Sigmoid colon (tissue), 7 donors: ENCODE measurements at regions of chr1 and their contacts with region 1.

Region 1: GRCh38 chr1:212630158-212630900 is 21.8 kb downstream of the ATF3 start:
- DNase-seq: peak; percentile 82
- H3K4me3 ChIP-seq: no peak overlapping the region
- H3K27ac ChIP-seq: no peak overlapping the region
- H3K4me1 ChIP-seq: peaks cover 0 to 5% (median 1%) of the 10 kb centered on the region in 4 donors
- H3K27me3 ChIP-seq: no peaks in the 10 kb centered on the region
- CTCF ChIP-seq: peak in 3 of 4 experiments; percentile 66 to 74 (median 70)
- EP300 ChIP-seq: no peak
- POLR2A ChIP-seq: no peak

Region 2: DNA sequence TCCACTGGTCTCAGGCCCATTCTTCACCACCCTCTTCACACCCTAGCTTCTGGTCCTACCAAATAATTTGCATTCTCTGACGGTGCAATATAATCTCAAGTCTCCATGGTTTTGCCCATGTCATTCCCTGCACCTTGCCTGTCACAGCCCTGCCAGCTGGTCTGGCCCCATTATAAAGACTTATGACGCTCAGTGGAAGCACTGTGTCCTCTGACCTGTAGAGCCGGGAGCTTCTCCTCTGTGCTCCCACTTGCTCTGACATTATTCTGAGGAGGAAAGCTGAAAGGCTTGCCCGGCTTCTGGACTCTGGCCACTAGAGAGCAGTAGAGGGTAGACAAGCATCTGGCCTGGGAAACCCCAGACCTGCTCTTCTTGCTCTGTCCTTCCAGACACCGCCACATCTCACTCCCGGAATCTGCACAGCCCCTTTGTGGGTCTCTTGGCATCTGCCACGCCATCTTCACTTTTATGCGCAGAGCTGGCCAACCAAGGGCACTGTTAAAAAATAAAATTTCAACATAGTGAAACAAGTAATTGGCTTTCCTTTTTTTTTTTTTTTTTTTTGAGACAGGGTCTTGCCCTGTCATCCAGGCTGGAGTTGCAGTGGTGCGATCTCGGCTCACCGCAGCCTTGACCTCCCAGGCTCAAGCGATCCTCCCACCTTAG is 153.2 kb before region 1 on chr1:
- intact Hi-C with region 1: loop called (anchors 1 kb)
- DNase-seq: peak; percentile 93
- H3K4me3 ChIP-seq: no peak overlapping the region
- H3K27ac ChIP-seq: no peak overlapping the region
- H3K4me1 ChIP-seq: peaks cover 0 to 6% (median 2%) of the 10 kb centered on the region in 4 donors
- H3K27me3 ChIP-seq: no peaks in the 10 kb centered on the region
- CTCF ChIP-seq: peak; percentile 62 to 88 (median 79)
- EP300 ChIP-seq: no peak
- POLR2A ChIP-seq: no peak